ENCODE measurements at regions of chr9 and their contacts with region 1.

Region 1: GRCh38 chr9:101119206-101119819 is 90.8 kb downstream of the PLPPR1 start:
- DNase-seq: peak; percentile 33 to 58
- ATAC-seq: peak; percentile 99 to 100
- H3K4me3 ChIP-seq: no peak overlapping the region
- H3K27ac ChIP-seq: no peak overlapping the region
- H3K4me1 ChIP-seq: no peaks in the 10 kb centered on the region
- CTCF ChIP-seq: peak; percentile 81
- EP300 ChIP-seq: no peak
- POLR2A ChIP-seq: no peak
- RAD21 ChIP-seq: peak; percentile 87 to 88

Region 2: GRCh38 chr9:101098392-101098791 is 20.9 kb before region 1 on chr9:
- CTCF ChIA-PET with region 1: interaction called, 10 read pairs
- POLR2A ChIA-PET with region 1: no interaction called
- DNase-seq: no peak
- ATAC-seq: no peak
- H3K4me3 ChIP-seq: no peak overlapping the region
- H3K27ac ChIP-seq: no peak overlapping the region
- H3K4me1 ChIP-seq: no peaks in the 10 kb centered on the region
- CTCF ChIP-seq: no peak
- EP300 ChIP-seq: no peak
- POLR2A ChIP-seq: no peak
- RAD21 ChIP-seq: no peak

Region 3: DNA sequence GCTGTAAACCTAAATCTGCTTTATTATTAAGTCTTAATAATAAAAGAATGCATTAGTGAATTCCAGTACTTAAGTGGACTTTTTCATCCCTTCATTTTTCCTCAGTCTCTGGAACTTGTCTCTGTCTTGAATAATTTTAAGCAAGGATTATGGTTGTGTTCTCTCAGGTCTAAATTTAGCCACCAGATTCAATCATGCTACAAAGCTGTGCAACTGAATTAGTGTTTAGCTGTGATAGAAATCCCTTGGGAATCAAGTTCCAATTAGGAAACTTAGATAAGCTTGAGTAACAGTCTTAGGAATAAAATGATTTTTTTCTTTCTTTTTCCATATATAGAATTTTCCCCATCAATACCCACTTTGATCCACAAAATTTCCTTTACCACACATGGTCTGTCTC is 13.5 kb after region 1 on chr9:
- CTCF ChIA-PET with region 1: interaction called, 18 read pairs
- POLR2A ChIA-PET with region 1: no interaction called
- DNase-seq: no peak
- ATAC-seq: no peak
- H3K4me3 ChIP-seq: no peak overlapping the region
- H3K27ac ChIP-seq: no peak overlapping the region
- H3K4me1 ChIP-seq: no peaks in the 10 kb centered on the region
- CTCF ChIP-seq: no peak
- EP300 ChIP-seq: no peak
- POLR2A ChIP-seq: no peak
- RAD21 ChIP-seq: no peak

Region 4: DNA sequence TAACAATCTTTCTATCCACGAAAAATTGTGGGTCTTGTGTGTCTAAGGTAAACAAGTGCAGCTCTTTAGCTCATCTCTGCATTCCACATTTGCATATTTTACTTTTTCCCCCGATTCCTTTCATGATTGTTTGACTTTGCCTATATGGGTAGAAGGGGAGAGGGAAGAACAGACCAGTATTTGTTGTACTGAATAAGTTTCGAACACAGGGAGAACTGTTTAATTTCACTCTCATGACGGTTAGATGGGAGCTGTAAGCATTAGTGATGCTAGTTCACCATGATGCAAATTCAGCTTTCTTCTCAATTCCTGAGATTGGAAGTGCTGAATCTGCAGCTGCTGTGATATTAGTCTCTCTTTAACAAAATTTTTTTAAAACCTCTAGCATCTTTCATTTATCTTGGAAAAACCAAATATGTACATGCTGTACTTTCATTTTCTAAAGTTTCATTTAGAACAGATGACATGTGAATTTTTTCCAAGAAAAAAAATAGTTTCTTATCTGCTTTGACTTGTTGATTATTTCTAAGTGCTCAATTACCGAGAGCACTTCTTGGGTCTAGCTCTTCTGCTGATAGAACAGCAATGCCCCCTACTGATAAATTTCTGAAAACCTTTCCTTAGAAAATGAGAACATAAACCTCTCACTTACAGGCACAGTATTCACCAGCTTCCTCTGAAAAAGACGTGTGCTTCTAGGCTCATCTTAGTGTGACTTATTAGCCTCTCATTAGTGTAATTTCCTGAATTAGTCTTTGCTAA is 116.0 kb after region 1 on chr9:
- CTCF ChIA-PET with region 1: interaction called, 12 read pairs
- POLR2A ChIA-PET with region 1: no interaction called
- DNase-seq: peak in 1 of 2 experiments; percentile 35
- ATAC-seq: peak; percentile 66 to 73
- H3K4me3 ChIP-seq: no peak overlapping the region
- H3K27ac ChIP-seq: no peak overlapping the region
- H3K4me1 ChIP-seq: no peaks in the 10 kb centered on the region
- CTCF ChIP-seq: peak; percentile 53
- EP300 ChIP-seq: no peak
- POLR2A ChIP-seq: no peak
- RAD21 ChIP-seq: peak; percentile 67 to 72

Measured in A549 (cell line).